Activated CD4-positive, alpha-beta T cell treated with anti-CD3 and anti-CD28 coated beads for 36 hours (primary cell): ENCODE measurements at regions of chr3 and their contacts with region 1.

Region 1: GRCh38 chr3:30751610-30752299 is 142.7 kb downstream of the GADL1 start:
- DNase-seq: peak; percentile 84
- ATAC-seq: peak; percentile 72
- H3K4me3 Mint-ChIP-seq: no peak overlapping the region
- H3K27ac Mint-ChIP-seq: peak overlapping the region; percentile 23
- H3K4me1 Mint-ChIP-seq: peaks cover 47% of the 10 kb centered on the region
- H3K27me3 Mint-ChIP-seq: no peaks in the 10 kb centered on the region

Region 2: DNA sequence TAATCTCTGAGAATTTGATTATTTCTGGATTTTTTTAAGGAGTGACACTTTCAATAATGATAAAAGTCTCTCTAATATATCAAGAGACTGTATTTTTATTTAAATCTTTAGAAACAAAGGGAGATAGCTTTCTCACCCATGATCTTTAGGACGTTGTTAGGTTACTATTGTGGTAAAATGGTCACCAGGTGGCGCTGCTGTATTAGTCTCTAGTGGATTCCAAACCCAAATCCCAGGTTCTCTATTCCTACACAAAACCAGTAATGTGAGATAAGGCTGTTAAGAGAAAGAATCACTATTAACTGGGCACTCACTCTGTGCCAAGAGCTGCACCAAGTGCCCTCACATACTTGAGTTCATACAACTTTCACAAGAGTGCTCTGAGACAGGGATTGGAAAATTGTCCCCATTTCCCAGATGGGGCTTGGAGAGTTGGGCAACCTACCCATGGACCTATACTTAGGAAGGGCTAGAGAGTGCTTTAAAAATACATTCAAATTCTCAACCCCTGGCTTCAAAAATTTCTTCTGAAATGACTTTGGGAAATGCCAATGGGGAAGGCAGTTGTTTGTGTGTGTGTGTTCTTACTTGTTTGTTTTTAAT is 738.7 kb before region 1 on chr3:
- CTCF ChIA-PET with region 1: interaction called, 4 read pairs
- POLR2A ChIA-PET with region 1: no interaction called
- intact Hi-C with region 1: loop called (anchors 2 to 10 kb)
- DNase-seq: peak; percentile 72
- ATAC-seq: no peak
- H3K4me3 Mint-ChIP-seq: no peak overlapping the region
- H3K27ac Mint-ChIP-seq: no peak overlapping the region
- H3K4me1 Mint-ChIP-seq: no peaks in the 10 kb centered on the region
- H3K27me3 Mint-ChIP-seq: no peaks in the 10 kb centered on the region

Region 3: DNA sequence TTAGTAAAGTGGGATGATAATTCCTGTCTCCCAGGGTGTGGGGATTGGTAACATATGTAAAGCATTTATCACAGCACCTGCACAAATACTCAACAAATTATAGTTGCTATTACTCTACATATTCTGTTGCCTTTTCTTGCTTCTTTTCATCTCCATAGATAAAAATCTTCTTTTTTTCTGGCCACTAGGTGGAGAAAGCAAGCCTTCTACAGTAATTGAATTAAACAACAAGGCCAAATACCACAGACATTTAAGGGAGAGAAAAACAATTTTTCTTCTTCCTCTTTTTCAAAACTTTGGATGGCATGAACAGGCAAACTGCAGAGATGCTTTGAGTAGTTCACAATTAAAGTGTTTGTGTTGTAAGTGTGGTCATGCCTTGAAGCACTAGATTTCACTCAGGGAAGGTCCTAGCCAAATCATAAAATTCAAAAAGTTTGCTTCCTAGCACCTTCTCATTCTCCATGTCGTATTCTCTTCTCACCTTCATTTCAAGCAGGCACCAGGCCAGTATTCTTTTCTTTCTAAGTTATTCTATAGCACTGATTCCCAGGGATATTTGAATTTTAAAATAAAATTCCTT is 638.8 kb before region 1 on chr3:
- CTCF ChIA-PET with region 1: interaction called, 5 read pairs
- POLR2A ChIA-PET with region 1: no interaction called
- intact Hi-C with region 1: loop called (anchors 1 kb)
- DNase-seq: no peak
- ATAC-seq: peak; percentile 19
- H3K4me3 Mint-ChIP-seq: no peak overlapping the region
- H3K27ac Mint-ChIP-seq: no peak overlapping the region
- H3K4me1 Mint-ChIP-seq: peaks cover 6% of the 10 kb centered on the region
- H3K27me3 Mint-ChIP-seq: no peaks in the 10 kb centered on the region

Region 4: GRCh38 chr3:30353711-30354467 is 397.9 kb before region 1 on chr3:
- CTCF ChIA-PET with region 1: interaction called, 4 read pairs
- POLR2A ChIA-PET with region 1: no interaction called
- intact Hi-C with region 1: loop called (anchors 5 to 10 kb)
- DNase-seq: peak; percentile 63
- ATAC-seq: peak; percentile 97
- H3K4me3 Mint-ChIP-seq: no peak overlapping the region
- H3K27ac Mint-ChIP-seq: no peak overlapping the region
- H3K4me1 Mint-ChIP-seq: peaks cover 73% of the 10 kb centered on the region
- H3K27me3 Mint-ChIP-seq: peaks cover 8% of the 10 kb centered on the region

Region 5: GRCh38 chr3:30553641-30554316 is 198.0 kb before region 1 on chr3:
- CTCF ChIA-PET with region 1: no interaction called
- POLR2A ChIA-PET with region 1: no interaction called
- intact Hi-C with region 1: no loop called
- DNase-seq: peak; percentile 39
- ATAC-seq: peak; percentile 77
- H3K4me3 Mint-ChIP-seq: no peak overlapping the region
- H3K27ac Mint-ChIP-seq: no peak overlapping the region
- H3K4me1 Mint-ChIP-seq: peaks cover 32% of the 10 kb centered on the region
- H3K27me3 Mint-ChIP-seq: no peaks in the 10 kb centered on the region

Region 6: GRCh38 chr3:30607032-30607833 is 144.5 kb before region 1 on chr3:
- CTCF ChIA-PET with region 1: no interaction called
- POLR2A ChIA-PET with region 1: no interaction called
- intact Hi-C with region 1: no loop called
- DNase-seq: peak; percentile 81
- ATAC-seq: peak; percentile 5
- H3K4me3 Mint-ChIP-seq: peak overlapping the region; percentile 99
- H3K27ac Mint-ChIP-seq: peak overlapping the region; percentile 94
- H3K4me1 Mint-ChIP-seq: peaks cover 63% of the 10 kb centered on the region
- H3K27me3 Mint-ChIP-seq: no peaks in the 10 kb centered on the region

Region 7: DNA sequence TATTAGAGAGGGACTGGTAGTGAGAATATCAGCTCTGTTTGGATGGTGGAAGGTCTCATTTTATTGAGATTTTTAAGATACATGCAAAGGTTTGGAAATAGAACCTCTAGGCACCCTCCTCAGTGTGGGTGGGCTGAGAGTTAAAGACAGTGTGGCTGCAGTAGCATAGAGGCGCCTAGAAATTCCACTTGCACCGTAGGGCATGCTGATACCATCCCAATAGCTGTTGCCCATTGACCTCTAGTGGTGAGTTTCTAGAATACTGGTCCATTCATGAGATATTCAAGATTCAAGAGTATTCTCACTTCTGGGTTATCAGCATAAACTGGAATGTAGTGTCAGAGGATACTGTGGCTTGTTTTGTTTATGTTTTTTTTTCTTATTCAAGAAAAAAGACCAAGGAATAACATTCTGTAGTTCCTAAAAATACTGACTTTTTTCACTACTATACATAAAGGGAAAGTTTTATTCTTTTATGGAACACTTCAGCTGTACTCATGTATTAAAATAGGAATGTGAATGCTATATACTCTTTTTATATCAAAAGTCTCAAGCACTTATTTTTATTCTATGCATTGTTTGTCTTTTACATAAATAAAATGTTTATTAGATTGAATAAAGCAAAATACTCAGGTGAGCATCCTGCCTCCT is 58.2 kb before region 1 on chr3:
- CTCF ChIA-PET with region 1: interaction called, 5 read pairs
- POLR2A ChIA-PET with region 1: no interaction called
- intact Hi-C with region 1: loop called in 1 of 2 experiments (anchors 5 kb)
- DNase-seq: peak; percentile 53
- ATAC-seq: peak; percentile 81
- H3K4me3 Mint-ChIP-seq: no peak overlapping the region
- H3K27ac Mint-ChIP-seq: peak overlapping the region; percentile 67
- H3K4me1 Mint-ChIP-seq: peaks cover 61% of the 10 kb centered on the region
- H3K27me3 Mint-ChIP-seq: no peaks in the 10 kb centered on the region